Endothelial cell of umbilical vein (primary cell): ENCODE measurements at regions of chr9 and their contacts with region 1.

Region 1: DNA sequence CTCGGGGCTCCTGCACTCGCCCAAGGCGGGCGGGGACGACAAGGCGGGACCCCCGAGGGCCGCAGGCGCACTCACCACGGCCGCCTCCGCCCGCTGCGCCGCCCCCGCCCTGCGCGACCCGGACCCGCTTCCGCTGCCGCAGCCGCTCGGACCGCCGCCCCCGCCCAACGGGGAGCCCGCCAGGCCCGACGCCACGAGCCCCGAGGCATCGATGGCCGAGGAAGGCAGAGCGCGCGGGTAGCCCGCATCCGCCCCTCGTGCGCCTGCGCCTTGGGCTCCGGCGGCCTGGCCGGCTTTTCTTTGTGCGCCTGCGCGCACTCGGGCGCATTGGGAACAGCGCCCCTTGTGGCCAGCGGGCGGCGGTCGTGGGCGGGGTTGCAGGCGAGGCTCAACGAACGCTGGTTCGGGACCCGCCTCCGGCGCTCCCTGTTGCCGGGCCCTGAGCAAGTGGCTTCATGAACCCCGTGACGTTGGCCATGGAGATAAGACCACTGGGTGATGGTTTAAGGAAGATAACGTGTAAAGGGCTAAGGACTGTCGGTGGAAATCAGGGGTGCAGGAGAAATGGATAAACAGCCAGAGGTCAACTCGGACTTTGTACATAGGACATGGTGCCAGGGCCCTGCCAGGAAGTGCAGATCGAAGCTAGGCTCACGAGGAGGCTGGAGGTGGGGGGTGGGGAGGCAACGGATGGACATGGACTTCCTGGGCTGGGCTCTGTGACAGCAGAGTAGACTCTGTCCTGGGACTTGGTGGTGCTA is at the starts of genes C8G and FBXW5:
- DNase-seq: peak; percentile 92
- H3K4me3 ChIP-seq: peak within 1 kb of the TSS; percentile 36 to 95 (median 60)
- H3K27ac ChIP-seq: peak within 1 kb of the TSS; percentile 64
- H3K4me1 ChIP-seq: no peaks in the 10 kb centered on the region
- H3K27me3 ChIP-seq: no peaks in the 10 kb centered on the region
- CTCF ChIP-seq: peak; percentile 99
- POLR2A ChIP-seq: peak; percentile 25
- total RNA-seq, gene C8G: 1.4 and 1.9 TPM in 2 replicates
- total RNA-seq, gene FBXW5: 95.6 and 97.3 TPM in 2 replicates

Region 2: DNA sequence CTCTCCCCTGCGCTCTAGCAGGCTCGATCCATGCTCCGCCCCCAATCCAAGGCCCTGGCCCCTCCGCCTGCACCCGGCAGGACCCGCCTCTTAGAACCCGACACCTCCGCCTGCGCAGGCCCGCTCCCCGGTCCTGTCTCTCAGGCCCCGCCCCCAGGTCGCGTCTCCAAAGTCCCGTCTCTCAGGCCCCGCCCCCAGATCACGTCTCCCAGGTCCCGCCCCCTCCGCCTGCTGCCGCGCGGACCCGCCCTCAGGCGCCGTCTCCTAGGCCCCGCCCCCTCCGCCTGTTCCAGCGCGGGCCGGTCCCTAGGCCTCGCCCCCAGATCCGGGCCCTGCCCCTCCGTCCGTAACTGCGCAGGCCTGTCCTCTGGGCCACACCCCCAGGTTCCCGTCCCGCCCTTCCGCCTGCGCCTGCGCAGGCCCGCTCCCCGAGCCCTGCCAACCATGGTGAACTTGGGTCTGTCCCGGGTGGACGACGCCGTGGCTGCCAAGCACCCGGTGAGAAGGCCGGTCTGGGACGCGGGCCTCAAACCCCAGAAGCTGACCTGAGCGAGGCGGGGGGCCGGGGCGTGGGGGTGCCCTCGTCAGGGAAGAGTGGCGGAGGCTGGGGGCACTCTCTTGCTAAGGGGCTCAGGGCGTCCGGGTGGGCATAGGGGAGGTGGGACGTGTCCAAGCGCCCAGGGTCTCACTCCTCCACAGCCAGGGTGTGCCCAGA is 153.6 kb before region 1 on chr9 and contains the start of gene TMEM141:
- CTCF ChIA-PET with region 1: no interaction called
- POLR2A ChIA-PET with region 1: no interaction called
- dilution Hi-C with region 1: no loop called
- intact Hi-C with region 1: loop called (anchors 1 kb)
- DNase-seq: peak; percentile 99
- H3K4me3 ChIP-seq: peak within 1 kb of the TSS; percentile 54 to 72 (median 59)
- H3K27ac ChIP-seq: peak within 1 kb of the TSS; percentile 31
- H3K4me1 ChIP-seq: peaks cover 7% of the 10 kb centered on the region
- H3K27me3 ChIP-seq: peaks cover 2 to 6% of the 10 kb centered on the region in 2 experiments
- CTCF ChIP-seq: no peak
- POLR2A ChIP-seq: peak; percentile 89
- total RNA-seq, gene TMEM141: 43.2 and 44.9 TPM in 2 replicates

Region 3: GRCh38 chr9:136807281-136808074 is 137.2 kb before region 1 on chr9 and contains the start of gene RABL6:
- CTCF ChIA-PET with region 1: interaction called, 3 read pairs
- POLR2A ChIA-PET with region 1: no interaction called
- dilution Hi-C with region 1: loop called (anchors 25 kb)
- intact Hi-C with region 1: loop called (anchors 1 kb)
- DNase-seq: peak; percentile 80
- H3K4me3 ChIP-seq: peak within 1 kb of the TSS; percentile 78 to 98 (median 90)
- H3K27ac ChIP-seq: peak within 1 kb of the TSS; percentile 59
- H3K4me1 ChIP-seq: peaks cover 15% of the 10 kb centered on the region
- H3K27me3 ChIP-seq: peaks cover 0 to under 1% of the 10 kb centered on the region in 2 experiments
- CTCF ChIP-seq: no peak
- POLR2A ChIP-seq: peak; percentile 94
- total RNA-seq, gene RABL6: 112 TPM in 2 replicates

Region 4: DNA sequence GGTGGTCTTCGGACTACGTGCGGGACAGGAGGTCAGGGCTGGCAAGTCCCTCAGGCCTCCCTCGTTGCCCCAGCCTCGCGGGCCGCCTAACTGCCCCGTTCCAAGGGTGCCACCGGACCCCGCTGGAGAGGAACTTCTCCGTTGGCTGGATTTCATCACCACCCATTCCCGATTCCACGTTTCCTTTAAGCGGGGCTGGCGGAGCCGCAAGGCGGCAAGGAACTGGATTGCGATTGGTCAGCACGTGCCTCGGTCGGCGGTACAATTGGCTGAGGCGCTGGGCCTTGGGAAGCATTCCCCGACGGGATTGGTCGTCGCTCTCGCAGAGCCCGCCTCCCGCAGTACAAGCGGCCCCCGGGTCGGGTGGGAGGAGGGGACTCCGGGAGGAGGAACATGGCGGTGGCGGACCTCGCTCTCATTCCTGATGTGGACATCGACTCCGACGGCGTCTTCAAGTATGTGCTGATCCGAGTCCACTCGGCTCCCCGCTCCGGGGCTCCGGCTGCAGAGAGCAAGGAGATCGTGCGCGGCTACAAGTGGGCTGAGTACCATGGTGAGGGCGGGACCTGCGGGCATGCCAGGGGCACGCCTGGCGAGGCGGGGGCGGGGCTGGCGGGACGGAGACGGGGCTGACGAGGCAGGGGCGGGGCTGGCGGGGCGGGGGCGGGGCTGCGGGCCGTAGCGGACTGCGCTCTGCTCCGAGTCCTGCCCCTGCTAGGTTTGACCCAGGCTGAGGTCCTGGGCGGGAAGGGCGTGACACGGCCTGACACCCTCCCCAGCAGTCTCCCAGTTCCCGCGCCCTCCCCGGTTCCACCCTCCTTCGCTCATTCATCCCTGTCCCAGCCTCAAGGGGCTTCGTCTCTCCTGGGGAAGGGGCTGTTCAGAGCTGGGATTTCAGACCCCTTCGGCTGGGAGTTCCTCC is 95.4 kb before region 1 on chr9 and contains the start of gene PHPT1:
- CTCF ChIA-PET with region 1: interaction called, 4 read pairs
- POLR2A ChIA-PET with region 1: no interaction called
- dilution Hi-C with region 1: no loop called
- intact Hi-C with region 1: loop called (anchors 2 kb)
- DNase-seq: peak; percentile 99
- H3K4me3 ChIP-seq: peak within 1 kb of the TSS; percentile 29 to 90 (median 54)
- H3K27ac ChIP-seq: no peak within 1 kb of the TSS
- H3K4me1 ChIP-seq: peaks cover 10% of the 10 kb centered on the region
- H3K27me3 ChIP-seq: peaks cover 8 to 23% of the 10 kb centered on the region in 2 experiments
- CTCF ChIP-seq: no peak
- POLR2A ChIP-seq: peak; percentile 97
- total RNA-seq, gene PHPT1: 139 and 165 TPM in 2 replicates

Region 5: DNA sequence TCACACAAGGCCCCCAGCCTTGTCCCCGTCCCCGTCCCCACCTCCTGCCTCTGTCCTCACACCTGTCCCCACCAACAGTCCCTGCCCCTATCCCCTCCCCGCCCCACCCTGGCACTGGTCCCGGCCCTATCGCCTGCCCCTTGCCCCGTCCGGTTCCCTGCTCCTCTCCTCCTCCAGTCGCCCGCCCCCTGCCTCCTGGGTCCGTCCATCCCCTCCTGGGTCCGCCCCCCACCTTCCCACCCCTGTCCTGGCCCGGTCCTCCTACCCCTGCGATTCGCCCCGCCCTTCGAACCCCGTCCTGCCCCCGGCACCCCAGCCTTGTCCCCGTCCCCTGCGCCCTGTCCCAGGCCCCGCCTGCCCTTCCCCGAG is 79.0 kb before region 1 on chr9:
- CTCF ChIA-PET with region 1: no interaction called
- POLR2A ChIA-PET with region 1: no interaction called
- dilution Hi-C with region 1: no loop called
- intact Hi-C with region 1: loop called (anchors 5 kb)
- DNase-seq: no peak
- H3K4me3 ChIP-seq: peak overlapping the region; percentile 48 to 98 (median 54)
- H3K27ac ChIP-seq: no peak overlapping the region
- H3K4me1 ChIP-seq: peaks cover 6% of the 10 kb centered on the region
- H3K27me3 ChIP-seq: no peaks in the 10 kb centered on the region
- CTCF ChIP-seq: no peak
- POLR2A ChIP-seq: no peak

Region 6: GRCh38 chr9:136885950-136886578 is 58.6 kb before region 1 on chr9 and contains the start of gene TRAF2:
- CTCF ChIA-PET with region 1: no interaction called
- POLR2A ChIA-PET with region 1: no interaction called
- dilution Hi-C with region 1: no loop called
- intact Hi-C with region 1: loop called (anchors 5 kb)
- DNase-seq: peak; percentile 100
- H3K4me3 ChIP-seq: peak within 1 kb of the TSS; percentile 62 to 87 (median 85)
- H3K27ac ChIP-seq: peak within 1 kb of the TSS; percentile 56
- H3K4me1 ChIP-seq: peaks cover 14% of the 10 kb centered on the region
- H3K27me3 ChIP-seq: no peaks in the 10 kb centered on the region
- CTCF ChIP-seq: no peak
- POLR2A ChIP-seq: peak; percentile 47
- total RNA-seq, gene TRAF2: 21.5 and 23.1 TPM in 2 replicates

Region 7: GRCh38 chr9:136902259-136902821 is 42.4 kb before region 1 on chr9:
- CTCF ChIA-PET with region 1: no interaction called
- POLR2A ChIA-PET with region 1: no interaction called
- dilution Hi-C with region 1: no loop called
- intact Hi-C with region 1: no loop called
- DNase-seq: peak; percentile 66
- H3K4me3 ChIP-seq: no peak overlapping the region
- H3K27ac ChIP-seq: peak overlapping the region; percentile 7
- H3K4me1 ChIP-seq: peaks cover 14% of the 10 kb centered on the region
- H3K27me3 ChIP-seq: no peaks in the 10 kb centered on the region
- CTCF ChIP-seq: no peak
- POLR2A ChIP-seq: no peak

Region 8: GRCh38 chr9:136991993-136992818 is 47.5 kb after region 1 on chr9 and contains the start of gene PAXX:
- CTCF ChIA-PET with region 1: interaction called, 27 read pairs
- POLR2A ChIA-PET with region 1: no interaction called
- dilution Hi-C with region 1: no loop called
- intact Hi-C with region 1: loop called (anchors 5 kb)
- DNase-seq: peak; percentile 80
- H3K4me3 ChIP-seq: peak within 1 kb of the TSS; percentile 47 to 56 (median 54)
- H3K27ac ChIP-seq: peak within 1 kb of the TSS; percentile 25
- H3K4me1 ChIP-seq: peaks cover 18% of the 10 kb centered on the region
- H3K27me3 ChIP-seq: no peaks in the 10 kb centered on the region
- CTCF ChIP-seq: no peak
- POLR2A ChIP-seq: no peak
- total RNA-seq, gene PAXX: 35.0 and 38.7 TPM in 2 replicates

Region 9: GRCh38 chr9:137138722-137139467 is 194.2 kb after region 1 on chr9 and contains the start of gene GRIN1:
- CTCF ChIA-PET with region 1: no interaction called
- POLR2A ChIA-PET with region 1: no interaction called
- dilution Hi-C with region 1: no loop called
- intact Hi-C with region 1: no loop called
- DNase-seq: no peak
- H3K4me3 ChIP-seq: no peak within 1 kb of the TSS
- H3K27ac ChIP-seq: no peak within 1 kb of the TSS
- H3K4me1 ChIP-seq: no peaks in the 10 kb centered on the region
- H3K27me3 ChIP-seq: peaks cover 35 to 36% of the 10 kb centered on the region in 2 experiments
- CTCF ChIP-seq: no peak
- POLR2A ChIP-seq: no peak
- total RNA-seq, gene GRIN1: not detected in 2 replicates